ENCODE measurements at regions of chr9 and their contacts with region 1.

Region 1: DNA sequence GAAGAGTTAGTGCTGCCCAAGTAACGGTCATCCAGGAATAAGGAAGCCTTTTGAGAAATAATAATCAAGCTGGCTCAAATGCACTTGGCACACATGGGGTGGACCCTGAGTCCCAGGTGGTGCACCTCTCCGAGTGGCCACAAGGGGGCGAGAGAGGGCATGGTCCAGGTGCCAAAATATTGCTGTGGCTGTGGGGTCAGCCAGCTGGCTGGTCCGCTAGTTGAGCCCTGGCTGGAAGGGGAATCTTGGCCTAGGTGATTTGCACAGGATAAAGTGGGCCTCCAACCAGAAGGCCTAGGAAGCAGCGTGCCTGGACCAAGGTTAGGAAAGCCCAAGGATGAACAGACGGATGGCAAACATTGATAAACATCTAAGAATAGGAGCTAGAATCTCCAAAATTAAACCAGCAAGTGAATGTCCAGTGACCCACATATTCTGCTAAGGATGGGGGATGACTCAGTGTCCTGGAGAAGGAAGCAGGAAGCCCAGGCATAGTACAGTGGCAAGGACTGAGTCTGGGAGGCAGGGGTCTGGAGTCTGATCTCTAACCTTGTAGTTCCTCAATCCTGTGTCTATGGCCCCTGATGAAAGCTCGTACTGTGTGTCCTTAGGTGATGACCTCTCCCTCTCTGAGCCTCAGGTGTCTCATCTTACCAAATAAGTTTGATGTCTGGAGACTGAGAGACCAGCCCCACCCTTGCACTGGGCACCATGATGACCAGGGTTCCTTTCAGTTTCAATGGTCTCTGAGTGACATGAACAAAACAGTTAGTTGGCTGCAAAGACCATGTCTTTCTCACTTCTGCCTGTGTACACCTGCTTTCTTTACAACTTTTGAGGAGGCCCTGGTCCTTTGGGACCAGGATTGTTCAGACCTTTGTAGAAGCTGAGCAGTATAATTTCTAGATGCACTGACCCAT is 19.2 kb upstream of the SHB start:
- DNase-seq: peak in 1 of 2 experiments; percentile 49
- H3K4me3 ChIP-seq: no peak overlapping the region
- H3K27ac ChIP-seq: no peak overlapping the region
- H3K4me1 ChIP-seq: peaks cover 22% of the 10 kb centered on the region
- H3K27me3 ChIP-seq: no peaks in the 10 kb centered on the region
- CTCF ChIP-seq: peak; percentile 93

Region 2: GRCh38 chr9:38160613-38161215 is 72.4 kb after region 1 on chr9:
- CTCF ChIA-PET with region 1: interaction called, 7 read pairs
- POLR2A ChIA-PET with region 1: no interaction called
- intact Hi-C with region 1: loop called (anchors 2 kb)
- DNase-seq: peak in 1 of 2 experiments; percentile 37
- H3K4me3 ChIP-seq: no peak overlapping the region
- H3K27ac ChIP-seq: no peak overlapping the region
- H3K4me1 ChIP-seq: no peaks in the 10 kb centered on the region
- H3K27me3 ChIP-seq: no peaks in the 10 kb centered on the region
- CTCF ChIP-seq: peak; percentile 81

Region 3: GRCh38 chr9:38263532-38263931 is 175.3 kb after region 1 on chr9:
- CTCF ChIA-PET with region 1: no interaction called
- POLR2A ChIA-PET with region 1: no interaction called
- intact Hi-C with region 1: loop called (anchors 5 kb)
- DNase-seq: peak in 1 of 2 experiments; percentile 37
- H3K4me3 ChIP-seq: no peak overlapping the region
- H3K27ac ChIP-seq: no peak overlapping the region
- H3K4me1 ChIP-seq: no peaks in the 10 kb centered on the region; the same call in 1 of the 2 replicates
- H3K27me3 ChIP-seq: no peaks in the 10 kb centered on the region
- CTCF ChIP-seq: peak; percentile 59